ENCODE measurements at regions of chr9 and their contacts with region 1.

Region 1: DNA sequence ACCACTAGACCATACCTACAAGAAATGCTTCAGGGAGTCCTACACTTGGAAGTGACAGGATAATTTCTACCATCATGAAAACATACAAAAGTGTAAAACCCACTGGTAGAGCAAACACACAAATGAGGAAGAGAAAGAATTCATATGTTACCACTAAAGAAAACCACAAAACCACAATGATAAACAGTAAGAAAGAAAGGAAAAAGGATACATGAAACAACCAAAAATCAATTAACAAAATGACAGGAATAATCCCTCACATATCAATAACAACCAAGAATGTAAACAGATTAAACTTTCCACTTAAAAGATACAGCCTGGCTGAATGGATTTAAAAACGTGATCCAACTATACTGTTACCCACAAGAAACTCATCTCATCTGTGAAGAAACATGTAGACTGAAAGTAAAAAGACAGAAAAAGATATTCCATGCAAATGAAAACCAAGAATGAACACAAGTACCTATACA is 83.4 kb downstream of the LPAR1 start:
- DNase-seq: no peak
- ATAC-seq: no peak
- H3K4me3 Mint-ChIP-seq: no peak overlapping the region
- H3K27ac Mint-ChIP-seq: no peak overlapping the region
- H3K4me1 Mint-ChIP-seq: no peaks in the 10 kb centered on the region
- H3K27me3 Mint-ChIP-seq: no peaks in the 10 kb centered on the region

Region 2: DNA sequence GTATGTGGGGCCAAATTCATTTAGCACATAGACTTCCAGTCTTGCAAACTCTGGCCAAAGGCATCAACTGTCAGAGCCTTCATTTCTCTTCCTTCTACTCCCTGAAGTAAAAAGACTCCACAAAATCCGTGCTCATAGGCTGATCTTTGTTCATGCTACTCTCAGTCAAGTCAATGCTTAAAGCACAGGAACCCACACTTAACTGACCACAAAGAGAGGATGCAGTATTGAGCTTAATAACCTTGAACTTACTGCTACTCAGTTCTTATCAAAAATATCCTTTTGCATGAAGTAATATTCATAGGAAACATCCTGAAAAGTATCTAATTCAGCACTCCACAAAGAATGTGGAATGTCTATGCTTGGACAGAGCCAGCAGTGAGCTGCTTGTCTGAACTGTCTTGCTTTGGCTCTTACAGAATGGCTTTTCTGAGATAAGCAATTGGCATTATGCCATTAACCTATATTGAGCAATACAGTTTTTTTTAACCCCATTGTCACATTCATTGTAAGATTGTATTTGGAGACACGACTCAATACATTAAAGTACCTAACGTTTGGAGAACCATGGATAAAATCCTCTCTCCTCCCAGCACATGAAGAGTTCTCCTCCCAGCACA is 61.7 kb after region 1 on chr9:
- CTCF ChIA-PET with region 1: no interaction called
- POLR2A ChIA-PET with region 1: no interaction called
- intact Hi-C with region 1: loop called in 1 of 2 experiments (anchors 2 kb)
- DNase-seq: no peak
- ATAC-seq: no peak
- H3K4me3 Mint-ChIP-seq: no peak overlapping the region
- H3K27ac Mint-ChIP-seq: no peak overlapping the region
- H3K4me1 Mint-ChIP-seq: no peaks in the 10 kb centered on the region
- H3K27me3 Mint-ChIP-seq: peaks cover 2% of the 10 kb centered on the region